Uterus (tissue), 4 donors: ENCODE measurements at regions of chr15 and their contacts with region 1.

Region 1: GRCh38 chr15:64430000-64430735 is 30.2 kb upstream of the ZNF609 start:
- DNase-seq: peak; percentile 68 to 71
- H3K4me3 ChIP-seq: no peak overlapping the region
- H3K27ac ChIP-seq: peak overlapping the region; percentile 71 to 77
- H3K4me1 ChIP-seq: peaks cover 0 to 5% of the 10 kb centered on the region in 2 donors
- H3K27me3 ChIP-seq: no peaks in the 10 kb centered on the region
- CTCF ChIP-seq: no peak
- POLR2A ChIP-seq: no peak

Region 2: GRCh38 chr15:64247906-64248541 is 182.1 kb before region 1 on chr15:
- intact Hi-C with region 1: no loop called
- DNase-seq: peak in 1 of 2 donors; percentile 24
- H3K4me3 ChIP-seq: no peak overlapping the region
- H3K27ac ChIP-seq: peak overlapping the region; percentile 68 to 90
- H3K4me1 ChIP-seq: no peaks in the 10 kb centered on the region
- H3K27me3 ChIP-seq: no peaks in the 10 kb centered on the region
- CTCF ChIP-seq: no peak
- POLR2A ChIP-seq: no peak

Region 3: DNA sequence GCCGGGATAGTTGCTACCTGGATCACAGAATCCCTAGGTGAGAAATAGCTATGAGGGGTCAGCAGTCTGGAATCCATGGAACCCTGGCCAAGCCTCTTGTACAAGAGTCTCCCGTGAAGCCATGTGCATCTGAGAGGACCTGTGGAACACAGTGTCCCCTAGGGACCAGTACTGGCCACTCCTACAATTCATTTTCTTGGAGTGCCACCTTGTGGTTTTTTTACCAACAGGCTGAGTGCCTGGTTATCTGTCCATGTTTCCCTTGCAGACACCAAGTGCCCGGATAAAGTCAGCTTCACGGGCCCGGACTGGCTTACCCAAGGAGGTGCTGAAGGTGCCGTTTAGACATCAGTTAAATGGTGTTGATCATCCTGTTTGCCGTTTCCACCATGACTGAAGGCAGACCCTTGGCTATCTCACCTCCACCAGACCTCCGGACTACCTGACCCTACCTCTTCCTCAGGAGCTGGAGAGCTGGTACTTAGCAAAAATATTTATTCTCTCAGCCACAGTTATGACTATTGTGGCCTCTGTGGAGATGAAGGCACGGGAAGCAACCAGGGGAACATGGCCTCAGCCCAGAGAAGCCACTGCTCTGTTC is 251.4 kb after region 1 on chr15:
- intact Hi-C with region 1: loop called (anchors 5 kb)
- DNase-seq: peak in 1 of 2 donors; percentile 46
- H3K4me3 ChIP-seq: no peak overlapping the region
- H3K27ac ChIP-seq: peak overlapping the region in 1 of 2 donors; percentile 39
- H3K4me1 ChIP-seq: peaks cover 0 to 7% of the 10 kb centered on the region in 2 donors
- H3K27me3 ChIP-seq: no peaks in the 10 kb centered on the region
- CTCF ChIP-seq: peak; percentile 41 to 71 (median 68)
- POLR2A ChIP-seq: no peak